ENCODE measurements at regions of chr20 and their contacts with region 1.

Region 1: GRCh38 chr20:54103067-54103761 is 32.8 kb upstream of the BCAS1 start:
- DNase-seq: no peak
- H3K4me3 ChIP-seq: no peak overlapping the region
- CTCF ChIP-seq: peak; percentile 87

Region 2: GRCh38 chr20:53828682-53829254 is 274.4 kb before region 1 on chr20:
- CTCF ChIA-PET with region 1: no interaction called
- POLR2A ChIA-PET with region 1: no interaction called
- DNase-seq: peak; percentile 86
- H3K4me3 ChIP-seq: peak overlapping the region; percentile 50
- CTCF ChIP-seq: peak; percentile 25

Region 3: GRCh38 chr20:54122189-54122588 is 19.0 kb after region 1 on chr20:
- CTCF ChIA-PET with region 1: interaction called, 76 read pairs
- POLR2A ChIA-PET with region 1: no interaction called
- DNase-seq: no peak
- H3K4me3 ChIP-seq: no peak overlapping the region
- CTCF ChIP-seq: no peak

Region 4: DNA sequence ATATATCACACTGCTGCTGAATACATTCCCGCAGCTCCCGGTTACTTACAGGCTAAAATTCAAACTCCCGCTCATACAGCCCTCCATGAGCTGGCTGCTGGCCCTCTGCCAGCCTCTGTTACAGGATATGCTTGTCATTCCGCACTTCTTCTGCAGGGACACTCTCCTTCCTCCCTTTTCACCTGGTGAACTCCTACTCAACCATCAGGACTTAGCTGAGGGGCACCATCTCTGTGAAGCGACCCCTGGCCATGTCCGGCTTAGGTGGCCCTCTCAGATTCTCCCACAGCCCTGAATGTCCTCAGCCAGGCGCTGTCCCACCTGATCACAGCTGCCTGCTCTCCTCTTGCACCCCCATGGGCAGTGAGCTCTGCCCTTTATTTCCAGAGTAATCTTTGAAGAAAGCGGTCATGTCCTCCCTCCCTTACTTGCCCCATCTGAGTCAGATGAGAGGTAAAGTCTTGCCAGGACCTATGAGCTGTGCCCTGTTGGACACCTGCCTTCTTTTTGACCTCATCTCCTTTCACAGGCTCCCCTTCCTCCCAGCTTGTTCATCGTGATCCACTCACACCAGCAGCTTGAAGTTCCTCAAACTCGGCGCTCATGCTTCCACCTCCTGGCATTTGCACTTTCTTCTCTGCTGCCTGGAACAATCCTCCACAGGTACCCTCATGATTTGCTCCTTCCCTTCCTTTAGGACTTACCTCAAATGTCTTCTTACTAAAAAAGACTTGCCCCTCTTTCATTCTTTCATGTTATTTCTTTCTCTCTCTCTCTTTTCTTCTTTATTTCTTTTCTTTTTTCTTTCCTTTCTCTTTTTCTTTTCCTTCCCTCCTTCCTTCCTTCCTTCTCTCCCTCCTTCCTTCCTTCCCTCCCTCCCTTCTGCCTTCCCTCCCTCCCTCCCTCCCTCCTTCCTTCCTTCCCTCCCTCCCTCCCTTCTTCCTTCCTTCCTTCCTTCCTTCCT is 65.0 kb after region 1 on chr20:
- CTCF ChIA-PET with region 1: interaction called, 17 read pairs
- POLR2A ChIA-PET with region 1: no interaction called
- DNase-seq: no peak
- H3K4me3 ChIP-seq: no peak overlapping the region
- CTCF ChIP-seq: no peak

Region 5: GRCh38 chr20:54188132-54188849 is 85.1 kb after region 1 on chr20:
- CTCF ChIA-PET with region 1: interaction called, 51 read pairs
- POLR2A ChIA-PET with region 1: no interaction called
- DNase-seq: no peak
- H3K4me3 ChIP-seq: no peak overlapping the region
- CTCF ChIP-seq: no peak

Region 6: GRCh38 chr20:54228858-54229257 is 125.6 kb after region 1 on chr20:
- CTCF ChIA-PET with region 1: no interaction called
- POLR2A ChIA-PET with region 1: no interaction called
- DNase-seq: no peak
- H3K4me3 ChIP-seq: no peak overlapping the region
- CTCF ChIP-seq: no peak

Region 7: DNA sequence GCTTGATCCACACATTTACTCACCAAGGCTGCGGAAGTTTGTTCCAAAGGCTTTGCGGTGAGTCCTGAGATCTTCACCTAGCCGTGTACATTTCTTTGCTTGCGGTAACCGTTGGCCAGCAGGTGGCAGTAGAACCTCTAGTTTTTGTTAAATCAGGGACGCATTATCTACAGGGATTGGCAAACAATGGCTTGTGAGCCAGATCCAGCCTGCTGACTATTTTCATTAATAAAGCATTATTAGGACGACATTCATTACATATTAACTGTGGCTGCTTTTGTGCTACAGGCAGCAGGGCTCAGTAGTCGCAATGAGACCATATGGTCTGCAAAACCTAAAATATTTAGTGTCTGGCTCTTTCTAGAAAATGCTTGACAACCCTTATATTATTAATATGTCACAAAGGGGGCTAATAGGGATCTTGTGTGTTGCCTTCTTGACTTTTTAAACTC is 546.3 kb after region 1 on chr20:
- CTCF ChIA-PET with region 1: interaction called, 17 read pairs
- POLR2A ChIA-PET with region 1: no interaction called
- DNase-seq: no peak
- H3K4me3 ChIP-seq: no peak overlapping the region
- CTCF ChIP-seq: peak; percentile 79

Measured in AG04449 (cell line).